Activated CD8-positive, alpha-beta T cell treated with anti-CD3 and anti-CD28 coated beads, Interleukin-2, amount 10 ng/mL, durations not matched to agents 7 days and 5 days (primary cell): ENCODE measurements at regions of chr17 and their contacts with region 1.

Region 1: DNA sequence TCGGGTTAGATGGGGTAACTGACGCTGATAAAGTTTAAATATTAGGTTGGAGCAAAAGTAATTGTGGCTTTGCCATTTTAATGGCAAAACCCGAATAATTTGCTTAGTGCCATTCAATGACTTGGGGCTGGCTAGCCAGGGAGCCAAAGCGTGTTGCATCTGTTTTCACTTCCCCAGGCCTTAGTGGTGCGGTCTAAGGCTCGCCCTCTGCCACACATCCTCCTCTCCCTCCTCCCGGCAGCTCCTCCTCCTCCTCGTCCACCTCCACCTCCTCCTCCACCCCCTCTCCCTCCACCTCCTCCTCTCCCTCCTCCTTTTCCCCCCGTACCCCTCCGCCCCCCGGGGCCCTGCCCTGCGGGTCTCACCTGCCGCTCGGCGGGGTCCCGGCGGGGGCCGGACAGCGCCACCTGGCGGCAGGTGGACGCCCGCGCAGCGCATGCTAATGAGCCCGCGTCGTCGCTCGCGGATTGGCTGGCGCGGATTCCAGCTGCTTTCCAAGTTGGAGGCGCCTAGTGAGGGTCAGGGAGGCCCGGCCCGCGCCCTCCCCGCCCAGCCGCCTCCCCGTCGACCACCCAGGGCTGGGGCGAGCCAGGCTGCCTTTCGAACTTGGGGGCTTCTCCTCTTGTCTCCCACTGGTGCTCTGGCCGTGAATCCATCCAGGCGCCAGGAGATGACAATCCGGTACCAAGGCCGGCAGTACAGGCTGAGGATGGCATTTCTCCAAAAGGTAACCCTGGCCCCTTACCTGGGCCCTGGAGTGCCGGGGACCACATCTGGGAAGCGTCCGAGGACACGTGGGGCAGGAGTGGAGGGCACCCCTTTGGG is 36.6 kb upstream of the RGS9 start:
- DNase-seq: peak; percentile 84
- ATAC-seq: peak; percentile 94
- H3K4me3 Mint-ChIP-seq: peak overlapping the region; percentile 72
- H3K27ac Mint-ChIP-seq: peak overlapping the region; percentile 81
- H3K4me1 Mint-ChIP-seq: peaks cover 18% of the 10 kb centered on the region
- H3K27me3 Mint-ChIP-seq: peaks cover 7% of the 10 kb centered on the region

Region 2: GRCh38 chr17:65055348-65056261 is 44.9 kb before region 1 on chr17:
- CTCF ChIA-PET with region 1: interaction called, 11 read pairs
- POLR2A ChIA-PET with region 1: no interaction called
- DNase-seq: peak; percentile 61
- ATAC-seq: peak; percentile 46
- H3K4me3 Mint-ChIP-seq: peak overlapping the region; percentile 93
- H3K27ac Mint-ChIP-seq: peak overlapping the region; percentile 88
- H3K4me1 Mint-ChIP-seq: peaks cover 50% of the 10 kb centered on the region
- H3K27me3 Mint-ChIP-seq: peaks cover 9% of the 10 kb centered on the region

Region 3: GRCh38 chr17:65115839-65116238 is 15.3 kb after region 1 on chr17:
- CTCF ChIA-PET with region 1: interaction called, 23 read pairs
- POLR2A ChIA-PET with region 1: no interaction called
- DNase-seq: no peak
- ATAC-seq: no peak
- H3K4me3 Mint-ChIP-seq: no peak overlapping the region
- H3K27ac Mint-ChIP-seq: peak overlapping the region; percentile 62
- H3K4me1 Mint-ChIP-seq: peaks cover 5% of the 10 kb centered on the region
- H3K27me3 Mint-ChIP-seq: peaks cover 28% of the 10 kb centered on the region

Region 4: GRCh38 chr17:65137021-65137991 is 36.8 kb after region 1 on chr17 and contains the start of gene RGS9:
- CTCF ChIA-PET with region 1: interaction called, 40 read pairs
- POLR2A ChIA-PET with region 1: no interaction called
- DNase-seq: peak; percentile 86
- ATAC-seq: peak; percentile 99
- H3K4me3 Mint-ChIP-seq: peak within 1 kb of the TSS; percentile 70
- H3K27ac Mint-ChIP-seq: peak within 1 kb of the TSS; percentile 50
- H3K4me1 Mint-ChIP-seq: peaks cover 36% of the 10 kb centered on the region
- H3K27me3 Mint-ChIP-seq: peaks cover 28% of the 10 kb centered on the region
- total RNA-seq, gene RGS9: 4.8 to 5.7 TPM

Region 5: DNA sequence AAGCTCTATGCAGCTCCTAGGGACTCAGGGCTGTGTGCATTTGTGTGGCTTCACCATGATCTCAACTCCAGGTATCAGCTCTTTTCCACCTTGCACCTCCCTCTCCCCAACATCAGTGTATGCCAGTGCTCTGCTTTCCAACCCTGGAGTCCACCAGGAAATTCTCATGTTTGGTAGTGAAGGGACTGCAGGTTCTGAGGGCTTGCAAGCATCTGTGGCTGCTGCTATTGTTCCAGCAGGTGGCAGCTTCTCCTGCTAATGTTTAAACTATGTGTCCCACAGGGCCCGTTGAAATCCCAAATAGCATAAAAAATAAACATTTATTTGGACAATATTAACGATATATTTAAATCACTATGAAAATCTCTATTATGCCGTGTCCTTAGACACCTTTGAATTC is 118.6 kb after region 1 on chr17:
- CTCF ChIA-PET with region 1: no interaction called
- POLR2A ChIA-PET with region 1: no interaction called
- DNase-seq: no peak
- ATAC-seq: no peak
- H3K4me3 Mint-ChIP-seq: no peak overlapping the region
- H3K27ac Mint-ChIP-seq: no peak overlapping the region
- H3K4me1 Mint-ChIP-seq: peaks cover 4% of the 10 kb centered on the region
- H3K27me3 Mint-ChIP-seq: peaks cover 24% of the 10 kb centered on the region

Region 6: DNA sequence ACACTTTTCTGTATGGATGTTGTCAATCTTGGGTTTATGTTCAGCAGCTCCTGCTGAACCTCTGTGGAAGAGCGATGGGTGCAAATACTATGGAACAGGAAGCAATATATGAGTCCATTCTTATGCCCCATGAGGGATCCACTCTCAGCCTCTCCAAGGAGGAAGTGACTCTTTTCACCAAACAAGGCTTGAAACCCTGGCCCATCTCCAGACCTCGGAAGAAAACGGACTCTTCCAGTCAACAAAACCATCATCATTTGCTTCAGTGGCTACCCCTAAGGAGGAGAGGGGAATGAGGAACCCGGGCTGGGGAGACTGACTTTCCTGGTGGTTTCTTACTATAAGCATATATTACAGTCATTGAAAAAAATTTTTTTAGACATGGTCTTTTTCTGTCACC is 254.7 kb after region 1 on chr17:
- CTCF ChIA-PET with region 1: no interaction called
- POLR2A ChIA-PET with region 1: no interaction called
- DNase-seq: no peak
- ATAC-seq: no peak
- H3K4me3 Mint-ChIP-seq: no peak overlapping the region
- H3K27ac Mint-ChIP-seq: no peak overlapping the region
- H3K4me1 Mint-ChIP-seq: no peaks in the 10 kb centered on the region
- H3K27me3 Mint-ChIP-seq: peaks cover 6% of the 10 kb centered on the region